ENCODE measurements at regions of chr5 and their contacts with region 1.

Region 1: DNA sequence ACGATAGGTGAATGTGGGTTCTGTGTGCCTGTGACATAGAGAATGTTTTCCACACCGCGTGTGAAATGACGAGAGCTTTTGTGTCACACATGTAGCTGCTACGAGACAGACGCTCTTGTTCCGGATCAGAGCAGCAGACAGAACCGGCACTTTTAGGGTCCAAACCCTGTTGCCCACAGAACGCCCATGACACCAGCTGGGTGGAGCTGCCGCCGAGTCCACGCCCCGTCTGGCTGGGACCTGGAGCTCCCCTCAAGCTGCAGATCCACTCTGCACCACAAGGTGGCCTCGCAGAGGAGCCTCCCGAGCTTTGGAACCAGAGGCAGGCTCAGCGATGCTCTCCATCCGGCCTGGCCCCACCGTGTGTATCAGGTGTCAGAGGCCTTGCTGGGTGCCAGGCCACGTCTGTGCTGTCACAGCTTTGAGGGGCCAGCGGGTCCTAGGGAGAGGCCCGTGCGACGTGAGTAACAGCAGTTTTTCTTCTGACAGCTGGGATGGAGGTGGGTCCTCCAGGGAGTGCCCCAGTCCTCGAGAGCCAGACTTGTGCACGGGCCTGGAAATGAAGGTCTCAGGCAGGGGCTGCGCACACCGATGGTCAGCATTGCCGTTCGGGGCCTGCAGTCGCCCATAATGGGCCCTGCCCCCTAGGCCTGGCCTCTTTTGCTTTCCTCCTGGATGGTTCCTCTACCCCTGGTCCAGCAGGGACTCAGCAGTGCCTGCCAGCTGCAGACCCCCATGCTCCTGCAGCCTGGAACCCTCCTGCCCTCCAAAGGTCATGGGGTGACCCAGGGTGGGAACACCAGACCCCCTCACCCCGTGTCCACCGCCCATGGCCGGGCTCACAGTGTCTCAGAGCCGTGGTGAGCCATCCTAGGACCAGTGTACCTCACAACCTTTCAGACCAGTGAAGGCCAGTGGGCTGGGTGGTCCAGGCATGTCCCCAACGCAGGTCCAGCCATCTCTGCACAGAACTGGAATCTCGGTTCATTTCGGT is 2.5 kb upstream of the LRRC14B start:
- DNase-seq: peak; percentile 76 to 97
- H3K4me3 ChIP-seq: no peak overlapping the region
- H3K27ac ChIP-seq: no peak overlapping the region
- H3K4me1 ChIP-seq: peaks cover 0 to 12% (median 9%) of the 10 kb centered on the region in 4 experiments; a peak in 5 of 7 replicates
- H3K27me3 ChIP-seq: no peaks in the 10 kb centered on the region
- CTCF ChIP-seq: peak in 2 of 3 experiments; percentile 86 to 97; a peak in 3 of 4 replicates
- EP300 ChIP-seq: no peak
- POLR2A ChIP-seq: no peak; a peak in 1 of 3 replicates
- RAD21 ChIP-seq: peak; percentile 75 to 77

Region 2: DNA sequence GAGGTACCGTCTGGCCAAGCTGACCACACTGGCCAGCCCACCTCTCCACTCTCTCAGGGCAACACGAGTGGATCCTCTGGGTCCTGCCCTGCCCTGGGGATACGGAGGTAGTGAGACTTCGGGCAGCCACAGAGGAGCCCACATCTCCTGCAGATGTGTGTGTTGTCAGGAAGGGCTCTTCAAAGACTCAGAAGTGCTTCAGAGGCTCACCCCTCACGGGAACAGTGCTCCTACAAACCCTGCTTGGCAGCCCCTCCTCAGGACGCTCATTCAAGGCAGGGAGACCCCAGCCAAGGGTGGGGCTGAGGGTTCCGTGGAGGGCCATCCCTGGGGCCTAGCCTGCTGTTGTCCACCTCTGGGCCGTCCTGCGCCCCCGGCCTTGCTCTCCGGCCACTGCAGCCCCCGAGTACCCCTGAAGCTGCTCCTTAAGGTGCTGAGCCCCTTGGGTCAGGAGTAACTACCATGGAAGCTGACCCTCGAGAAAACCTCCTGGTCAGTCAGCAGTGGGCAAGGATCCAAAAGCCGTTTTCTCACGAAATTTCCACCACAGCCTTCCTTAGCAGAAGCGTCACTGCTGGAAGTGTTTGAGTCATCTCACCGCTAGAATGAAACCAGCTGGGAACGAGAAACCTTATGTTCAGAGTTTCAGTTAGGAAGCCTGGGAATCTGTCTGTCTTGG is 20.7 kb before region 1 on chr5:
- CTCF ChIA-PET with region 1: interaction called, 15 read pairs
- POLR2A ChIA-PET with region 1: interaction called, 9 read pairs
- DNase-seq: no peak
- H3K4me3 ChIP-seq: no peak overlapping the region
- H3K27ac ChIP-seq: no peak overlapping the region
- H3K4me1 ChIP-seq: no peaks in the 10 kb centered on the region
- H3K27me3 ChIP-seq: no peaks in the 10 kb centered on the region; a peak in 1 of 7 replicates
- CTCF ChIP-seq: no peak
- EP300 ChIP-seq: no peak
- POLR2A ChIP-seq: no peak
- RAD21 ChIP-seq: no peak

Region 3: GRCh38 chr5:199950-200645 is 11.3 kb after region 1 on chr5:
- CTCF ChIA-PET with region 1: interaction called, 18 read pairs
- POLR2A ChIA-PET with region 1: interaction called, 11 read pairs
- DNase-seq: no peak
- H3K4me3 ChIP-seq: no peak overlapping the region
- H3K27ac ChIP-seq: no peak overlapping the region
- H3K4me1 ChIP-seq: no peaks in the 10 kb centered on the region
- H3K27me3 ChIP-seq: no peaks in the 10 kb centered on the region
- CTCF ChIP-seq: no peak
- EP300 ChIP-seq: no peak
- POLR2A ChIP-seq: no peak
- RAD21 ChIP-seq: no peak

Region 4: GRCh38 chr5:217860-218456 is 29.2 kb after region 1 on chr5 and contains the starts of genes CCDC127 and SDHA:
- CTCF ChIA-PET with region 1: interaction called, 10 read pairs
- POLR2A ChIA-PET with region 1: interaction called, 5 read pairs
- DNase-seq: peak; percentile 90 to 100
- H3K4me3 ChIP-seq: peak within 1 kb of the TSS; percentile 84 to 93 (median 90)
- H3K27ac ChIP-seq: peak within 1 kb of the TSS; percentile 64; the same call in 1 of the 2 replicates
- H3K4me1 ChIP-seq: peaks cover 0 to 4% (median 2%) of the 10 kb centered on the region in 4 experiments; a peak in 2 of 7 replicates
- H3K27me3 ChIP-seq: no peaks in the 10 kb centered on the region
- CTCF ChIP-seq: peak; percentile 10 to 38 (median 28); a peak in 3 of 4 replicates
- EP300 ChIP-seq: no peak
- POLR2A ChIP-seq: peak; percentile 67 to 72
- RAD21 ChIP-seq: no peak
- total RNA-seq, gene CCDC127: 7.2 and 8.0 TPM in 2 replicates
- total RNA-seq, gene SDHA: 86.1 and 87.3 TPM in 2 replicates